Endothelial cell of umbilical vein (primary cell): ENCODE measurements at regions of chr1 and their contacts with region 1.

Region 1: DNA sequence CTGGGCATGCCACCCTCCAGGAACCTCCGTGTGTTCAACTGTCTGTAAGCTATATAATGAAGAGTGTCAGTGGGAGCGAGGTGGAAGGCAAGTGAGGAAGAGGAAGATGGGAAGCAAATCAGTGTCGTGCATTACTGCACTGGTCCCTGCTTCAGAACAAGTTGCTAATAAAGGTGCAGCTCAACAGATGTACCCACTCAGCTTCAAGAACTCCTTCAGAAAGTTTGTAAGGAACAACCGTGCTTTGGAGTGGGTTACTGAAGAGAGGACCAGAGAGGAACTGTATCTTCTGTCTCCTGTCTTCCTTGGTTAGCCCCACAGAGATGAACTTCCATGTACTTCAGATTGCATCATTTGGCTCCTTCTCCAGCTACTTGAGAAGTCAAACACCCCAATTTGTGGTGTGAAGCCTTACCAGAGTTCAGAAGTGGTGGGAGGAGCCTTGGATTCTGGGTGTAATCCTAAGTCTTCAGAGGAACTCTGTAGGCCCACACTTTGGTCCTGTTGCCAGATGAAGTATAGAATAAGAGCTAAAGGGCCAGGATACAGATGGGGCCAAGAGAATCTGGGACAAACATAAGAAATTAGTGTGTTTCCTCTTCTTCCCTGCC is 290.5 kb upstream of the PROX1 start:
- DNase-seq: no peak
- H3K4me3 ChIP-seq: no peak overlapping the region
- H3K27ac ChIP-seq: no peak overlapping the region
- H3K4me1 ChIP-seq: no peaks in the 10 kb centered on the region
- H3K27me3 ChIP-seq: no peaks in the 10 kb centered on the region
- CTCF ChIP-seq: no peak
- POLR2A ChIP-seq: no peak

Region 2: DNA sequence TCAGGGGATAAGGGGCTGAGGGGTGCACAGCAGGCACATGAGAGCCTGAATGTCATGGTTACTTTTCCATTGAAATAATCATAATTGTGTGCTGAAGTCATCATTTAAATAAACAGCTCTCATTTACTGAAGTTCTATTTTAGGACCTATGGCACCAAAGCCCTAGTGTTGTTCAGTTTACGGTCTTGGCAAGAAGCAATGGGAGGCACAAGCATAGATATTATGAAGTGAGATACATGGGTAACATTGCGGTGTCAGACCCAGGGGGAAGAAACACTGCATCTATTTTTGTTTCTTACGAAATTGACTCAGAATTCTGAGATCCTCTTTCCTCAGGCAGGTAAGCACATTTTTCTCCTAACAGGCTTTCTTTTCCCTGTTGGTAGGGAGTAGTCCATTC is 147.3 kb before region 1 on chr1:
- CTCF ChIA-PET with region 1: no interaction called
- POLR2A ChIA-PET with region 1: no interaction called
- dilution Hi-C with region 1: no loop called
- intact Hi-C with region 1: no loop called
- DNase-seq: no peak
- H3K4me3 ChIP-seq: no peak overlapping the region
- H3K27ac ChIP-seq: no peak overlapping the region
- H3K4me1 ChIP-seq: no peaks in the 10 kb centered on the region
- H3K27me3 ChIP-seq: no peaks in the 10 kb centered on the region
- CTCF ChIP-seq: no peak
- POLR2A ChIP-seq: no peak

Region 3: GRCh38 chr1:213680677-213681325 is 16.5 kb before region 1 on chr1:
- CTCF ChIA-PET with region 1: no interaction called
- POLR2A ChIA-PET with region 1: no interaction called
- dilution Hi-C with region 1: no loop called
- intact Hi-C with region 1: no loop called
- DNase-seq: no peak
- H3K4me3 ChIP-seq: no peak overlapping the region
- H3K27ac ChIP-seq: no peak overlapping the region
- H3K4me1 ChIP-seq: no peaks in the 10 kb centered on the region
- H3K27me3 ChIP-seq: no peaks in the 10 kb centered on the region
- CTCF ChIP-seq: no peak
- POLR2A ChIP-seq: no peak

Region 4: GRCh38 chr1:213761845-213762407 is 64.6 kb after region 1 on chr1:
- CTCF ChIA-PET with region 1: no interaction called
- POLR2A ChIA-PET with region 1: no interaction called
- dilution Hi-C with region 1: no loop called
- intact Hi-C with region 1: loop called (anchors 2 kb)
- DNase-seq: peak; percentile 63
- H3K4me3 ChIP-seq: no peak overlapping the region
- H3K27ac ChIP-seq: no peak overlapping the region
- H3K4me1 ChIP-seq: peaks cover 13% of the 10 kb centered on the region
- H3K27me3 ChIP-seq: no peaks in the 10 kb centered on the region
- CTCF ChIP-seq: no peak
- POLR2A ChIP-seq: no peak